HCT116 (cell line): ENCODE measurements at regions of chr5 and their contacts with region 1.

Region 1: DNA sequence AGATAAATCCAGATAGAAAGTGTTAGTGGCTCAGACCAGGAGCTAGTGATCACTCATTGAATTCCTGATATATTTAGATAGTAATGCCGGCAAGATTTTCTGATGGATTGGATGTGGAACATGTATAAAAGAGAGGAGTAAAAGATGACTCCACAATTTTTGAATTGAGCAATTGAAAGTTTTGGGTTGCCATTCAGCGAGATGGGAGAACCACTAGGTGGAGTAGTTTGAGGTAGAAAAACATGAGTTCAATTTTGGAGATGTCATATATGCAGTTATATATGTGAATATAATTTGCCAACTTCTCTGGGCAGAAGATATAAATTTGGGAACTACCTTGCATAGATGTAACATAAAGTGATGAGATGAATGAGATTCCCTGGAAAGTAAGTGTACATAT is 502.5 kb upstream of the SEMA6A start:
- DNase-seq: peak; percentile 8
- ATAC-seq: peak; percentile 66; the same call in 1 of the 2 replicates
- H3K4me3 ChIP-seq: no peak overlapping the region
- H3K27ac ChIP-seq: no peak overlapping the region
- H3K4me1 ChIP-seq: no peaks in the 10 kb centered on the region
- H3K27me3 ChIP-seq: no peaks in the 10 kb centered on the region
- CTCF ChIP-seq: peak; percentile 34 to 77 (median 68); a peak in 5 of 6 replicates
- POLR2A ChIP-seq: no peak
- RAD21 ChIP-seq: peak; percentile 54

Region 2: DNA sequence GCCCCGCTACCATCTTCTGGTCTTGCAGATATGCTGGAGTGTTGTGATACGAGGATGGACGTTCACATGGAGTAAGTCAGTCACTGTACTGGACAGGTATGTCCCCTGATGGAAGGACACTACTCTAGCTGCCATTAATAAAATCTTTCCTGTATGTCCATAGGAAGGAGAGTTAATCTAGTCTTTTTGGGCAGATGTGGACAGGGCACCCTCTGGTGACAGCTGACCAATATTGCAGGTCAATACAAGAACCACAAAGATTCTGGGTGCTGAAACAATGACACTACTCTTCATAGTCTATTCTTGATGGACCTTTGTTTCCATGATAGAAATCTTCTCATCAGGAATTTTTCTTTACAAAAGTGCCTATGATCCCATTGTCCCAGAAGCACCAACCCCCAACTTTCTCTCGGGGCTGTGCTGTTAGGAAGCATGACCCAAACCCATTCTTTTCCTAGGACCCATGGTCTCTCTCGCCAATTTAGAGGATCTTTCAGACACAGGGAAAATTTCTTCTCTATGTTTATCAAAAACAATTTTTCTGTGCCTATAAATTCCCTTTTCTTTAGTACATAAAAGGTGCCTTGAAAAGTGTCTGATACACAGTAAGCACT is 1534.3 kb after region 1 on chr5:
- CTCF ChIA-PET with region 1: no interaction called
- POLR2A ChIA-PET with region 1: no interaction called
- RAD21 ChIA-PET with region 1: no interaction called
- intact Hi-C with region 1: loop called (anchors 5 kb)
- DNase-seq: peak; percentile 19
- ATAC-seq: peak; percentile 76
- H3K4me3 ChIP-seq: no peak overlapping the region
- H3K27ac ChIP-seq: no peak overlapping the region
- H3K4me1 ChIP-seq: no peaks in the 10 kb centered on the region
- H3K27me3 ChIP-seq: no peaks in the 10 kb centered on the region
- CTCF ChIP-seq: peak; percentile 48 to 85 (median 78); a peak in 5 of 6 replicates
- POLR2A ChIP-seq: no peak
- RAD21 ChIP-seq: peak; percentile 87

Region 3: DNA sequence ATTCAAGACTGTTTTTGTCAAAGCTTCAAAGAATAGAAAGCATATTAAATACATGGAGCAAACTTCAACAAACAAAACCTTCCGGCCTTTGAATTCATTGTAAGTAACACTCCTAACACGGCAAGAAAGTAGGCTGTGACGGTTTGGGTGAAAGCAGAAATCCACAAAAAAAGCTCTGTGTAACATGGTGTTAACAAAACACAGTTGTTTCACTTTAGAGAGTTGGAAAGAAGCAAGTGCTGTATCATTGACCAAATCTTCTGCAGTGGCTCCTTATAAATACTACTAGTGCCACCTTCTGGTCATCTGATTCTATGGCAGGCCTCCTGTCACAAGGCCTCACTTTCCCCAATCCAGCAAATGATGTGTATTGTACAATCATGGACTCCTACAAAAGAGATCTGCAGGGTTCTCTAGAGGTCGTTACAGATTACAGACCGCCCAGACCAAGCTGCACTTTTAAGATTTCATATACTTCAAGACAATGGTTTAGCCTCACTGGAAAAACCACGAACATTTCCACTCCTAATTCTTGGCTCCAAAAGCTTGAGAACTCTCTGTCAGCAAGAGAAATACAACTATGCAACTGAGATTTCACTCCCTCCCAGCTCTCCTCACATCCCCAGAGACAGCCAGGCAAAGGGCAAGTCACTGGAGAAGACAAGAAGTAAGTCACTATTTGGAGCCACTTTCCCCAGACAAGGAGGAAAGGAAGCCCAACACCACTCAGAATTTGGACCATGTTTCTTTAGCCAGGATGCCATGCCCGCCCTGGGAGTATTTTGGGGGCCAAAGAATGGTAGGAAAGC is 1715.0 kb after region 1 on chr5:
- CTCF ChIA-PET with region 1: no interaction called
- POLR2A ChIA-PET with region 1: no interaction called
- RAD21 ChIA-PET with region 1: no interaction called
- intact Hi-C with region 1: loop called (anchors 10 kb)
- DNase-seq: peak; percentile 45
- ATAC-seq: peak; percentile 90
- H3K4me3 ChIP-seq: no peak overlapping the region
- H3K27ac ChIP-seq: no peak overlapping the region
- H3K4me1 ChIP-seq: no peaks in the 10 kb centered on the region
- H3K27me3 ChIP-seq: no peaks in the 10 kb centered on the region
- CTCF ChIP-seq: peak; percentile 52 to 87 (median 70); a peak in 5 of 6 replicates
- POLR2A ChIP-seq: no peak
- RAD21 ChIP-seq: peak; percentile 83